A549 (cell line): ENCODE measurements at regions of chr16 and their contacts with region 1.

Region 1: GRCh38 chr16:84952335-84953189 is 58.8 kb downstream of the ZDHHC7 start:
- DNase-seq: peak; percentile 80
- ATAC-seq: peak; percentile 89 to 97
- H3K4me3 ChIP-seq: no peak overlapping the region
- H3K27ac ChIP-seq: no peak overlapping the region
- H3K4me1 ChIP-seq: no peaks in the 10 kb centered on the region
- CTCF ChIP-seq: peak; percentile 78
- EP300 ChIP-seq: no peak
- POLR2A ChIP-seq: no peak
- RAD21 ChIP-seq: peak; percentile 68 to 81

Region 2: GRCh38 chr16:84765616-84766580 is 186.7 kb before region 1 on chr16:
- CTCF ChIA-PET with region 1: interaction called, 14 read pairs
- POLR2A ChIA-PET with region 1: no interaction called
- DNase-seq: no peak
- ATAC-seq: no peak
- H3K4me3 ChIP-seq: no peak overlapping the region
- H3K27ac ChIP-seq: no peak overlapping the region
- H3K4me1 ChIP-seq: no peaks in the 10 kb centered on the region
- CTCF ChIP-seq: no peak
- EP300 ChIP-seq: no peak
- POLR2A ChIP-seq: no peak
- RAD21 ChIP-seq: no peak

Region 3: GRCh38 chr16:84819644-84820324 is 132.8 kb before region 1 on chr16 and contains the start of gene CRISPLD2:
- CTCF ChIA-PET with region 1: interaction called, 10 read pairs
- POLR2A ChIA-PET with region 1: interaction called, 5 read pairs
- DNase-seq: peak; percentile 83 to 93
- ATAC-seq: peak; percentile 93 to 99
- H3K4me3 ChIP-seq: peak within 1 kb of the TSS; percentile 44
- H3K27ac ChIP-seq: peak within 1 kb of the TSS in 1 of 2 experiments; percentile 55; a peak in 1 of 6 replicates
- H3K4me1 ChIP-seq: peaks cover 11% of the 10 kb centered on the region; the same call in 2 of the 3 replicates
- CTCF ChIP-seq: no peak
- EP300 ChIP-seq: no peak
- POLR2A ChIP-seq: peak; percentile 95
- RAD21 ChIP-seq: no peak
- polyA plus RNA-seq, gene CRISPLD2: 0.85 and 0.89 TPM in 2 replicates

Region 4: GRCh38 chr16:84925092-84925772 is 27.3 kb before region 1 on chr16:
- CTCF ChIA-PET with region 1: interaction called, 90 read pairs
- POLR2A ChIA-PET with region 1: no interaction called
- DNase-seq: peak; percentile 48 to 60
- ATAC-seq: peak; percentile 67 to 90; a peak in 5 of 6 replicates
- H3K4me3 ChIP-seq: no peak overlapping the region
- H3K27ac ChIP-seq: no peak overlapping the region
- H3K4me1 ChIP-seq: peaks cover 5% of the 10 kb centered on the region; the same call in 1 of the 3 replicates
- CTCF ChIP-seq: peak; percentile 86
- EP300 ChIP-seq: no peak
- POLR2A ChIP-seq: no peak
- RAD21 ChIP-seq: peak; percentile 81 to 82

Region 5: DNA sequence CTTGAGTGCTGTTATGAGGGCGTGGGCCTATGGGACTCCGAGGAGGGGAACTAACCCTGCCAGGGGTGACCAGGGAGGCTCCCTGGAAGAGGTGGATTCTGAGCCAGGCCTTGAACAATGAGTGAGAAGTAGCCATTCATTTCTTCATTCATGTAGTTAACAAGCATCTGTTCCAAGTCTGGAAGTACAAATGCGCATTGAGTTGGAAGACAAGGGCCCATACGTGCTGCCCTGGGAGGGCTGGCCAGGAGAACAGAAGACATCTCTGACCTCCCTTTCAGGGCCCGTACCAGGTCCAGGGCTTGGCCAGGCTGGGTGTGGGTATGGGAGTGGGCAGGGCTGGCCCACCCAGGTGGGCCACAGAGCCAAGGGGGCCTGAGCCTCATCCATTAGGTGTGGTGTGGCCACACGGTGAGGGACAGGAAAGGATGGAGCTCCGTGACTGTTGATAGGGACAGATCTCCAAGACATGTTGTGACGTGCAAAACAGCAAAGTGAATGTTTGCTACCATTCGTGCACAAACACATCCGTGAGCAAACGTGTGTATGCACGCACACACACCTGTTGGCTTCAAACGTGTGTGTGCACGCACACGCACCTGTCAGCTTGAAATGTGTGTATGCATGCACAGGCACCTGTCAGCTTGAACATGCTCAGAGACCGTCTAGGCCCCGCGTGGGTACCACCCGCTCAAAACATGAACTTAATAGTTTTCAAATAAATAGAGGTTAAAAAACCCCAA is 12.0 kb after region 1 on chr16:
- CTCF ChIA-PET with region 1: interaction called, 184 read pairs
- POLR2A ChIA-PET with region 1: no interaction called
- DNase-seq: no peak
- ATAC-seq: no peak
- H3K4me3 ChIP-seq: no peak overlapping the region
- H3K27ac ChIP-seq: no peak overlapping the region
- H3K4me1 ChIP-seq: no peaks in the 10 kb centered on the region
- CTCF ChIP-seq: no peak
- EP300 ChIP-seq: no peak
- POLR2A ChIP-seq: no peak
- RAD21 ChIP-seq: no peak